Calu3 (cell line): ENCODE measurements at regions of chr1 and their contacts with region 1.

Region 1: GRCh38 chr1:26035959-26036755 is 9.8 kb downstream of the SLC30A2 start:
- DNase-seq: peak; percentile 83
- H3K4me3 Mint-ChIP-seq: peak overlapping the region; percentile 96
- H3K27ac Mint-ChIP-seq: peak overlapping the region; percentile 52
- H3K4me1 Mint-ChIP-seq: peaks cover 12% of the 10 kb centered on the region
- H3K27me3 Mint-ChIP-seq: peaks cover 19% of the 10 kb centered on the region
- CTCF ChIP-seq: peak; percentile 97

Region 2: DNA sequence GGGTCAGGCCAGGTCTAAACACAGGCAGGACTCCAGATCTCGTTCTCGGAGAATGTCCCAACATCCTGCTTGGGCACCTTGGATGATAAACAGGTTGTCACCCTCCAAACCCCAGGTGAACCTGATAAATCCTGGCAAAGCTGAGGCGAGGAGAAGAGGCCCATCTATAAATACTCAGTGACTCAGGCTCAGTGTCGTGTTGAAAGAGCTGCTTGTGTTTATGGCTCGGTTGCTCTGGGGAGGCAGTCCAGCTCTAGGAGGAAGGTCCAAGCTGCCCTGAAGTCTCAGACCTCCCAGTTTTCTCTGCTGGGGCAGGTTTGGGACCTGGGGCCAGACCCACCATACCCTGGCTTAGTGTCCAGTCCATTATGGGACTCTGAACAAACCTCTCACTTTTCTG is 47.1 kb after region 1 on chr1:
- CTCF ChIA-PET with region 1: no interaction called
- intact Hi-C with region 1: no loop called
- DNase-seq: peak; percentile 4
- H3K4me3 Mint-ChIP-seq: no peak overlapping the region
- H3K27ac Mint-ChIP-seq: no peak overlapping the region
- H3K4me1 Mint-ChIP-seq: peaks cover 28% of the 10 kb centered on the region
- H3K27me3 Mint-ChIP-seq: no peaks in the 10 kb centered on the region
- CTCF ChIP-seq: no peak

Region 3: GRCh38 chr1:26102526-26102925 is 66.4 kb after region 1 on chr1:
- CTCF ChIA-PET with region 1: interaction called, 3 read pairs
- intact Hi-C with region 1: loop called (anchors 2 kb)
- DNase-seq: no peak
- H3K4me3 Mint-ChIP-seq: no peak overlapping the region
- H3K27ac Mint-ChIP-seq: no peak overlapping the region
- H3K4me1 Mint-ChIP-seq: peaks cover 9% of the 10 kb centered on the region
- H3K27me3 Mint-ChIP-seq: no peaks in the 10 kb centered on the region
- CTCF ChIP-seq: no peak

Region 4: DNA sequence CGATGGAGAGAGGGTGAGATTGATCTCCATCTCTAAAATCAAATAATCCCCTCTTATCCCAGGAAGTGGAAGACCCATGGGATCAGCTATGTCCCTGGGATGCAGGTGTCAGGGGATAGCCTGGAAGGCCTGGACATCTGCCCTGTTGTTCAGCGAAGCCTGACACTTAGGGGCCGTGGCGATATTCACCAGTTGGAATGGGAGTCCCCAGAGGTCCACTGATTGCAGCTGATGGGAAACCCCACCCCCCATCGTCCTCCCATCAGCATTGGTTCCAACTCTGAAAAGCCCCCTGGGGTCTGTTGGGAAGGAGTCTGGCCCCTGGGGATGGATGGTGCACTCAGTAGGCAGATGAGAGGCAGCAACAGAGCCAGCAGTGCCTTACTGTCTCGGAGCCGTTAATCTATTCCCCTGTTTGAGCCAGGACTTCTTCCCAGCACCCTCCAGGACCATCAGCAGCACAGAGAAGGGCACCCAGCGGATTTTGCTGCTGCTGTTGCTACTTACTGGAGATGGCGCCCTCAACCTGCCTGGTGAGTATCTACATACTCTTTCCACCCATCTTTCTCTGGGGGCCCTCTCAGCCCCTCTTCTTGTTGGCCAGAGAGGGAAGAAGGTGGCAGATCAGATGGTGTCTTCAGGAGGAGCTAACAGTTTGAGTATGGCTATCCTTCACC is 167.6 kb after region 1 on chr1:
- CTCF ChIA-PET with region 1: no interaction called
- intact Hi-C with region 1: no loop called
- DNase-seq: no peak
- H3K4me3 Mint-ChIP-seq: no peak overlapping the region
- H3K27ac Mint-ChIP-seq: no peak overlapping the region
- H3K4me1 Mint-ChIP-seq: no peaks in the 10 kb centered on the region
- H3K27me3 Mint-ChIP-seq: peaks cover 62% of the 10 kb centered on the region
- CTCF ChIP-seq: no peak